ENCODE measurements at regions of chr14 and their contacts with region 1.

Region 1: GRCh38 chr14:92531106-92531873 is 17.7 kb downstream of the RIN3 start:
- DNase-seq: peak; percentile 63
- ATAC-seq: peak; percentile 89
- H3K4me3 ChIP-seq: no peak overlapping the region
- H3K4me3 Mint-ChIP-seq: peak overlapping the region; percentile 35
- H3K27ac ChIP-seq: peak overlapping the region; percentile 15 to 61
- H3K27ac Mint-ChIP-seq: peak overlapping the region; percentile 80
- H3K4me1 ChIP-seq: peaks cover 20 to 32% of the 10 kb centered on the region in 2 donors
- H3K4me1 Mint-ChIP-seq: peaks cover 44% of the 10 kb centered on the region
- H3K27me3 ChIP-seq: no peaks in the 10 kb centered on the region
- H3K27me3 Mint-ChIP-seq: no peaks in the 10 kb centered on the region
- CTCF ChIP-seq: no peak

Region 2: GRCh38 chr14:92121207-92121669 is 410.1 kb before region 1 on chr14:
- CTCF ChIA-PET with region 1: no interaction called
- POLR2A ChIA-PET with region 1: no interaction called
- intact Hi-C with region 1: no loop called
- DNase-seq: no peak
- ATAC-seq: peak; percentile 9
- H3K4me3 ChIP-seq: peak overlapping the region; percentile 85 to 99 (median 90)
- H3K4me3 Mint-ChIP-seq: peak overlapping the region; percentile 97
- H3K27ac ChIP-seq: peak overlapping the region; percentile 87 to 96
- H3K27ac Mint-ChIP-seq: peak overlapping the region; percentile 100
- H3K4me1 ChIP-seq: peaks cover 9 to 29% of the 10 kb centered on the region in 2 donors
- H3K4me1 Mint-ChIP-seq: peaks cover 38% of the 10 kb centered on the region
- H3K27me3 ChIP-seq: no peaks in the 10 kb centered on the region
- H3K27me3 Mint-ChIP-seq: no peaks in the 10 kb centered on the region
- CTCF ChIP-seq: no peak

Region 3: GRCh38 chr14:92259613-92260357 is 271.5 kb before region 1 on chr14:
- CTCF ChIA-PET with region 1: no interaction called
- POLR2A ChIA-PET with region 1: interaction called, 12 read pairs
- intact Hi-C with region 1: no loop called
- DNase-seq: no peak
- ATAC-seq: no peak
- H3K4me3 ChIP-seq: no peak overlapping the region
- H3K4me3 Mint-ChIP-seq: no peak overlapping the region
- H3K27ac ChIP-seq: no peak overlapping the region
- H3K27ac Mint-ChIP-seq: peak overlapping the region; percentile 37
- H3K4me1 ChIP-seq: peaks cover 0 to 6% of the 10 kb centered on the region in 2 donors
- H3K4me1 Mint-ChIP-seq: peaks cover 6% of the 10 kb centered on the region
- H3K27me3 ChIP-seq: peaks cover 0 to 17% (median 7%) of the 10 kb centered on the region in 4 experiments
- H3K27me3 Mint-ChIP-seq: peaks cover 15% of the 10 kb centered on the region
- CTCF ChIP-seq: no peak

Region 4: DNA sequence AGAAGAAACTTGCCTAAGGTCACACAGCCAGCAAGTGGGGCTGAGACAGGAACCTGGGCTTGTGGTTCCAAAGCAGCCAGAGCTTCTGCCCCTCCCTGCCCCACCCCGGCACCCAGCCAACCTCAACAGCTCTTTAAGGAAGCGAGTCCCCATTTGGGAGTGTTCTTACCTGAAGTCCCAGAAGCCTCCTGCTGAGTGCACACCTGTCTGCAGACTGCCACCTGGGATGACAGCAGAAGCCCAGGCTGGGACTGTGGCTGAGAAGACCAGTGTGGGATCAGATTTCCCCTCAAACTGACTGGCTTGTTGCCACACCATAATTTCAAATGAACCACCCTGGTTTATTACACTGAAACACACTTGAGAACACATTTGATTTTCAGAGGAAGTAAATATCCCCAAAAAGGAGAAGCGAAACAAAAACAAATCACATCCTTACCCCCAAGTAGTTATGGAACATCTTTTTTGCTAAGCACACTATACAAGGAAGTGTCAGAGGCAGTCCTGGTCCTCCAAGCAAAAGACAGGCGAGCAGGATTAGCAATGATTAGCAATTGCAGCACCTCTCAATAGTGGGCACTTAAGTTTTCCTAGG is 24.0 kb before region 1 on chr14:
- CTCF ChIA-PET with region 1: no interaction called
- POLR2A ChIA-PET with region 1: interaction called, 5 read pairs
- intact Hi-C with region 1: loop called (anchors 1 kb)
- DNase-seq: peak; percentile 84
- ATAC-seq: peak; percentile 77
- H3K4me3 ChIP-seq: peak overlapping the region in 4 of 5 experiments; percentile 5 to 53 (median 14)
- H3K4me3 Mint-ChIP-seq: peak overlapping the region; percentile 46
- H3K27ac ChIP-seq: peak overlapping the region; percentile 59 to 70
- H3K27ac Mint-ChIP-seq: peak overlapping the region; percentile 80
- H3K4me1 ChIP-seq: peaks cover 37 to 55% of the 10 kb centered on the region in 2 donors
- H3K4me1 Mint-ChIP-seq: peaks cover 62% of the 10 kb centered on the region
- H3K27me3 ChIP-seq: no peaks in the 10 kb centered on the region
- H3K27me3 Mint-ChIP-seq: no peaks in the 10 kb centered on the region
- CTCF ChIP-seq: no peak

Region 5: DNA sequence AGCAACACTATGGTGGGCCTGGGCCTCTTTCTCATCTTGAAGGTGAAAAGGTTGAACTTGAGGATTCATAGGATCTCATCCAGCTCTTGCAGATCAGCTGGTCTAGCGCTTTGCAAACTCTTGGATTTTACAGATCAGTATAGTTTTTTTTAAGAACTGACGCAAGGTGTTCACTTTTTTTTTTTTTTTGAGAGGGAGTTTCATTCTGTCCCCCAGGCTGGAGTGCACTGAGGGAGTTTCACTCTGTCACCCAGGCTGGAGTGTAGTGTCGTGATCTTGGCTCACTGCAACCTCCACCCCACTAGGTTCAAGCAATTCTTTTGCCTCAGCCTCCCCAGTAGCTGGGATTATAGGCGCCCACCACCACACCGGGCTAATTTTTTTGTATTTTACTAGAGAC is 237.5 kb after region 1 on chr14:
- CTCF ChIA-PET with region 1: no interaction called
- POLR2A ChIA-PET with region 1: interaction called, 12 read pairs
- intact Hi-C with region 1: no loop called
- DNase-seq: no peak
- ATAC-seq: no peak
- H3K4me3 ChIP-seq: no peak overlapping the region
- H3K4me3 Mint-ChIP-seq: peak overlapping the region; percentile 70
- H3K27ac ChIP-seq: peak overlapping the region; percentile 71 to 79
- H3K27ac Mint-ChIP-seq: peak overlapping the region; percentile 89
- H3K4me1 ChIP-seq: peaks cover 32 to 42% of the 10 kb centered on the region in 2 donors
- H3K4me1 Mint-ChIP-seq: peaks cover 46% of the 10 kb centered on the region
- H3K27me3 ChIP-seq: no peaks in the 10 kb centered on the region
- H3K27me3 Mint-ChIP-seq: no peaks in the 10 kb centered on the region
- CTCF ChIP-seq: no peak